G401 (cell line): ENCODE measurements at regions of chr19 and their contacts with region 1.

Region 1: GRCh38 chr19:35557539-35558399 is 5.7 kb downstream of the ATP4A start:
- DNase-seq: peak; percentile 78

Region 2: DNA sequence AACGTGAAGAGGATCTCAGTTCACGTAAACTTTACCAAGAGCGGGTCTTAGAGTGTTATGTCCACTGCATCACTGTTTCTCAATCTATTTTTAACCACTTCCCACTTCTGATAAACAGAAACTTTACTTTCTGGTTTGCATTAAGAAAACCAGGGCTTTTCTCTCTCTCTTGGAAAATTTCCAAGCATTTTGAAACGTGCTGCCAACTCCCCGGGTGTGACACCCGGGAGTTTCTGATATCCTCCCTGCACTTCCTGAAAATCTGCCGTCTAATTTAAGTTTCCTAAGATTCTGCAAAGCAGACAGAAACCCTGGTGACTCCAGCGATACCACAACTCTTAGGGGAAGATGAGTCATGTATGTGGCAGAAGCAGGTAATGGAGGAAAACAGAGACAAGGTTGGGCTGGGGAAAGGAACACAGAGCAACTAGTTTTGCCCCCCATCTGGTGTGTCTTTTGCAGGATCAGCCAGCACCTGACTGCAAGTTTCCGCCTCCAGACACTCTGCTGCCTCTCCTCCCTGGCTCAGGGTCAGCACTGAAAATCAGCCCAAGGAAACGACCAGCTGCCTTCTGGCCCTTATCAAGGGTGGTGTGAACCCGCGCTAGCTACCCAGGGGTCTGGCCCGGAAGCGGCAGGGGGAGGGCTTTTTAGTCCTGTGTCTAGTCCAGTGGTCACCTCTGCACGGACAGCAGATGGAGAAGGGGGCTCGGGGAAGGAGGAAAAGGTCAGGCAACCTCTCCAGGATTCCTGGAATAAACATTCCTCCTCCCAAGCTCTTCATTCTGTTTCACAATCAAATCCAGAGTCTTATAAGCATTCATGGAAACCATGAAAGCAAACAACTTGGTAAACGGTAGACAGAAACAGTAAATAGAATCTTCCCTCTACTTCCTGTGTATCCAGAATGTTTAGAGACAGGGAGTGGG is 121.0 kb before region 1 on chr19:
- in situ Hi-C with region 1: no loop called
- DNase-seq: no peak

Region 3: DNA sequence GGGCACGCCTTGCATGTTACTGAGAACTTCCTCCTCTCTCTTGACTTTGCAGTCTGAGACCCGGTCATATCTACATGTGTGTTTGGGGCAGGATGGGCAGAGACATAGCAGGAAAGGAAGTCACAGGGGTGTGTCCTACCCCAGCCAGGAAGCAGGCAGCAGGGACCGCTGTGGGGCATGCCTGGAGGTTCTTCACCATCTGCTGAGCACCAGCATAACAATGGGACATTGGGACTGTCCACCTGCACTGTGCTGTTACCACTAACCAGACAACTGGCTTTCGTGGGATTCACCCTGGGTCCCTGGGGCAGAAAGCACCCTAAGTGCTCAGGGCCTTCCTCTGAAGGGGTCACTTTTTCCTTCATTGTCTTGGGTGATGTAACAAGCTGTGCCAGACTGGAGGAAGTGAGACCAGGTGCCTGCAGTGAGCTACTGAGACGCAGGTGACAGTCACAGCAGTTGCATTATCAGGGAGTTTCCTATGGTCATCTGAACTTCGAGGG is 52.1 kb after region 1 on chr19:
- in situ Hi-C with region 1: loop called (anchors 5 kb)
- DNase-seq: no peak

Region 4: DNA sequence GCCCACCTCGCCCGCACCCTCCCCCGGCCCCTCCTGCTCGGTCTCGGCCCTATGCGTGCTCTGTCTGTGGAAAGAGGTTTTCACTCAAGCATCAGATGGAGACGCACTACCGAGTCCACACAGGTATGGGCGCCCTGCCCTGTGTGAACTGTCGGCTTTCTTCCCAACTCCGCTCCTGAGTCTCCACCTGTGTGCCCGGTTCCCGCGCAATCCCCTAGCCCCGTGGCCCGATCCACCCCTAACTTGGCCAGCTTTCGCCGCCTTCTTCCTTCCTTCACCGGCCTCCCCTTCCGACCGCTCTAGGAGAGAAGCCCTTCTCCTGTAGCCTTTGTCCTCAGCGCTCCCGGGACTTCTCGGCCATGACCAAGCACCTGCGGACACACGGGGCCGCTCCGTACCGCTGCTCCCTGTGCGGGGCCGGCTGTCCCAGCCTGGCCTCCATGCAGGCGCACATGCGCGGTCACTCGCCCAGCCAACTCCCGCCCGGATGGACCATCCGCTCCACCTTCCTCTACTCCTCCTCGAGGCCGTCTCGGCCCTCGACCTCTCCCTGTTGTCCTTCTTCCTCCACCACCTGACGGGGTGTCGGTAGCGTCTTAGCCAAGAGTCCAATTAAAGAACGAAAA is 158.5 kb after region 1 on chr19:
- in situ Hi-C with region 1: no loop called
- DNase-seq: peak; percentile 74